Tibial artery (tissue), 4 donors: ENCODE measurements at regions of chr18 and their contacts with region 1.

Region 1: DNA sequence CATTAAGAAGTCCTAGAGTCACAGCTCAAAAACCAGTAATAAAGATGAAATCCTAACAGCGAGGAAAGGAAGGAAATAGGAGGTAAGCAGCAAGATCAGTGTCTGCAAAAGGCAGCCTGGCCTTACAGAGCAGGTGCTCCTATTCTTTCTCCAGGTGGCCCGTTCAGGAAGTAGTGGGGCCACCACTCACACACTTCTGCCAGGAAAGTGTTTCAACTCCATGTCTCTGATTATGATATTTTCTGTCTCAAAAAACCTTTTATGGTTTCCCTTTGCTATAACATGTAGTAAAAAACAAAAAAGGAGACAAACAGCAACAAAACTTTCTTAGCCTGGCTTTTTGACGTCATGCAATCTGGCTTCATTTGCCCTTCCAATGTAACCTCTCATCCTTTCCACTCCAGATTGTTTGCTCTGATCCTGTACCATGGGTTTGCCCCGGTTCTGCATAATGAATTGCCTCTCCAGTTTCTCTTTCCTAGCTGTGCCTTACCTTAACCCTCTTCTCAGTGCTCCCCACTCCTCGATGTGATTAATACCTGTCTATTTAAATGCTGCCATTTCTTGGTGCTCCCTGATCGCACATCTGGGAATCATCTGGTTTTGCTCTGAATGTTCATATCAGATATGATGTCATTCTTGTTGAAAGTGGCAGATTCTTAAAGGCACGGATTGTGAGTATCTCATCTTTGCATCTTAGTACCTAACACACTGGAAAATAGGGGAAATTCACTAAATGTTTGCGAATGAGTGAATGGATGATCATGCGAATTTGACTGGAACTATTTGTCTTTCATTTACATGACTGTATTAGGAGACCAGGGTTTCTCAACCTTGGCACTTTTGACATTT is 50.6 kb upstream of the PTPRM start:
- DNase-seq: no peak
- H3K4me3 ChIP-seq: no peak overlapping the region
- H3K27ac ChIP-seq: no peak overlapping the region
- H3K4me1 ChIP-seq: peaks cover 0 to 26% (median 5%) of the 10 kb centered on the region in 4 donors
- H3K27me3 ChIP-seq: no peaks in the 10 kb centered on the region
- CTCF ChIP-seq: no peak

Region 2: GRCh38 chr18:7094432-7094831 is 422.1 kb before region 1 on chr18:
- intact Hi-C with region 1: no loop called
- DNase-seq: no peak
- H3K4me3 ChIP-seq: no peak overlapping the region
- H3K27ac ChIP-seq: no peak overlapping the region
- H3K4me1 ChIP-seq: peaks cover 0 to 10% (median 0%) of the 10 kb centered on the region in 4 donors
- H3K27me3 ChIP-seq: no peaks in the 10 kb centered on the region
- CTCF ChIP-seq: no peak

Region 3: GRCh38 chr18:7190547-7191156 is 325.8 kb before region 1 on chr18:
- intact Hi-C with region 1: no loop called
- DNase-seq: no peak
- H3K4me3 ChIP-seq: no peak overlapping the region
- H3K27ac ChIP-seq: no peak overlapping the region
- H3K4me1 ChIP-seq: no peaks in the 10 kb centered on the region
- H3K27me3 ChIP-seq: no peaks in the 10 kb centered on the region
- CTCF ChIP-seq: no peak

Region 4: DNA sequence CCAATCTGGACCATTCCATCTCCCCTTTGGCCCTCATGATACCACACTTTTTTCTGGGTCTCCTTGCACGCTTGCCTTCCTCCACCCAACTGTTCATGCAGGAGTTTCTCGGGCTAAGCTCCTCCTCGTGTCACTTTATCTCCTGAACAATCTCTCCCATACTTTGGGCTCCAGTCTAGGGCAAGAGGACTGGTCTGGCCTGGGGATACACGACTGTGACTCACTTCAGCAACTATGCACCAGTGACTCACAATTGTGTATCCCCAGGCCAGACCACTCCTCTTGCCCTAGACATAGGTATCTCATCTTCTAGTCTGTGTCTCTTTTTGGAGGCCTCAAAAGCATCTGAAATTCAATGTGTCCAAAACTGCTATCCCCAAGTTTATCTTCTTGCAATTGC is 98.8 kb before region 1 on chr18:
- intact Hi-C with region 1: no loop called
- DNase-seq: no peak
- H3K4me3 ChIP-seq: no peak overlapping the region
- H3K27ac ChIP-seq: no peak overlapping the region
- H3K4me1 ChIP-seq: no peaks in the 10 kb centered on the region
- H3K27me3 ChIP-seq: no peaks in the 10 kb centered on the region
- CTCF ChIP-seq: no peak

Region 5: DNA sequence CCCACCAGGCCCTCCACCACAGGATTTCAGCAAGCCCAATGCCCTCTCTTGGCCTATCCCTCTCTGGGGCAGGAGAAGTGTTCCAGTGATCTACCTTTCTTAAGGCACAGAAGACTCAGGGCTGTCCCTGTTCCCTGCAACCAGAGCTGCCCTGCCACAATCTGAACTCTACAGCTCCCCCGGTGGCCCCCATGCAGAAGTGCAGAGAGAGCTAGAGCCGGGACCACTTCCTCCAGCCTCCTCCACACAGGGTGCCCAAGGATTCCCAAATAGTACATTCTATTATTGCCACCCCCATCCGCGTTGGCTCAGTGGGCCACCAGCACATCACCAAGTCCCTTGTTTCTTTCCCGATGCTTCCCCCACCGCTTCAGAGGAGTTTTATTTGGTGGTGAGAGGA is 64.2 kb before region 1 on chr18:
- intact Hi-C with region 1: loop called (anchors 2 kb)
- DNase-seq: peak in 1 of 2 donors; percentile 28
- H3K4me3 ChIP-seq: no peak overlapping the region
- H3K27ac ChIP-seq: no peak overlapping the region
- H3K4me1 ChIP-seq: no peaks in the 10 kb centered on the region
- H3K27me3 ChIP-seq: no peaks in the 10 kb centered on the region
- CTCF ChIP-seq: peak; percentile 35 to 51